ENCODE measurements at regions of chr6 and their contacts with region 1.

Region 1: DNA sequence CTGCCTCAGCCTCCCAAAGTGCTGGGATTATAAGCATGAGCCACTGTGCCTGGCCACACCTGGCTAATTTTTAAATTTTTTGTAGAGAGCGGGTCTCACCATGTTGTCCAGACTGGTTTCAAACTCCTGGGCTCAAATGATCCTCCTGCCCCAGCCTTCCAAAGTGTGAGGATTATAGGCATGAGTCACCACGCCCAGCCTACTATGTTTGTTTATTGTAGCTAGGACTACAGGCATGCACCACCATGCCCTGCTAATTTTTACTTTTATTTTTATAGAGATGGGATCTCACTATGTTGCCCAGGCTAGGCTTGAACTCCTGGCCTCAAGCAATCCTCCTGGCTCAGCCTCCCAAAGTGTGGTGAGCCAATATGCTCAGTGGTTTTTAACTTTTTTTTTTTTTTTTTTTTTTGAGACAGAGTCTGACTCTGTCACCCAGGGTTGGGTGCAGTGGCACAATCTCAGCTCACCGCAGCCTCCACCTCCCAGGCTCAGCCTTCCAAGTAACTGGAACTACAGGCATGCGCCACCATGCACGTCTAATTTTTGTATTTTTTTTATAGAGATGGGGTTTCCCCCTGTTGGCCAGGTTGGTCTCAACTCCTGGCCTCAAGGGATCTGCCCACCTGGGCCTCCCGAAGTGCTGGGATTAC is 12.0 kb upstream of the DDX43 start:
- DNase-seq: no peak
- ATAC-seq: no peak
- H3K4me3 ChIP-seq: no peak overlapping the region
- H3K4me3 Mint-ChIP-seq: no peak overlapping the region
- H3K27ac ChIP-seq: no peak overlapping the region
- H3K27ac Mint-ChIP-seq: no peak overlapping the region
- H3K4me1 ChIP-seq: no peaks in the 10 kb centered on the region
- H3K4me1 Mint-ChIP-seq: no peaks in the 10 kb centered on the region
- H3K27me3 ChIP-seq: no peaks in the 10 kb centered on the region
- H3K27me3 Mint-ChIP-seq: no peaks in the 10 kb centered on the region

Region 2: DNA sequence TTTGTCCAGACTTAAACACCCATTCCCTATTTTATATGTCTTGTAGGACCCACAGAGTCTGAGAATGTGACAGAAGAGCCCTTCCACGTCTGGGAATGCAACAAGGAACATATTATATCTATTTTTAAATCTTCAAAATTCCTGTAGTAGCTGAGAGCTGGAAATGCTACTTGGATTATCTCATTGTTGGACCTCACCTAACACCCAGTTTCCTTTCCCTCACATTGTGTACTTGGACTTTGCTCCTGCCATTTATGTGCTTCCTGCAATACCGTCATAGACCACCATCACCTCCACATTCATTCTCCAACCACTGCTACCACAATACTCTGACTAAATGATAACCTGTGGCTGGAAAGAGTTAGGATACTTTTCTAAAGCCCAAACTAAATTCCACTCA is 1487.8 kb after region 1 on chr6:
- CTCF ChIA-PET with region 1: no interaction called
- POLR2A ChIA-PET with region 1: interaction called in 1 of 2 experiments, 10 read pairs
- DNase-seq: no peak
- ATAC-seq: no peak
- H3K4me3 ChIP-seq: no peak overlapping the region
- H3K4me3 Mint-ChIP-seq: no peak overlapping the region
- H3K27ac ChIP-seq: no peak overlapping the region
- H3K27ac Mint-ChIP-seq: no peak overlapping the region
- H3K4me1 ChIP-seq: no peaks in the 10 kb centered on the region
- H3K4me1 Mint-ChIP-seq: no peaks in the 10 kb centered on the region
- H3K27me3 ChIP-seq: no peaks in the 10 kb centered on the region
- H3K27me3 Mint-ChIP-seq: no peaks in the 10 kb centered on the region

Measured in T-cell (primary cell).